ENCODE measurements at regions of chr11 and their contacts with region 1.

Region 1: DNA sequence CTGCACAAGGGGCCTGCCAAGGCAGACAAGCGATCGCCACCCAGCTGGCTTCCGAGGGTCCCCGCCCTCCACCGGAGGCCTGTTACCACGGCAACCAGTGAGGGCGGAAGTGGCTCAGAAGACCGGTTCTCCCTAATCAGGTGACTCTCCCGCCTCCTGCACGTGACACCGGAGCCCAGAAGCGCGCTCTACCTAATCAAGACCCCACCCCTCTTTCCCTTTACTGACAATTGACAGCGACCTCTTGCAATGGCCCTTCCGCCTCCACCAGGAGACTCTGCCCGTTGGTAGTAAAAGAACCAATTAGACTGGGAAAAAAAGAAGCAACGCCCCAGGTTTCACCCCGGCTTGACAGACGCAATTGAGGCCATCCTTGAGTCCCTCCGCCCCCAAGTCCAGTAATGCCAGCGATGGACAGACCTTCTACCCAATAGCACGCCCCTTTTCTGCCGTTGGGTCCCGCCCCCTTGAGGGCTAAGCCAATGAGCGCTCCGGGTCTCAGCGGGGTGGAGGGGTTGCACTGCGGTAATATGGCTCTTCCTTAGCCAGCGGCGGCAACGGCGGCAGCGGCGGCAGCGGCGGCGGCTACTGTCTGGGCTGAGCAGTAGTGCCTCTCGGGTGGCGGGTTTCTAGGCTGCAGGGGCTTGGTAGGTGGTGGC is at the start of gene UVRAG:
- DNase-seq: peak; percentile 99
- ATAC-seq: peak; percentile 96
- H3K4me3 ChIP-seq: peak within 1 kb of the TSS; percentile 73 to 88 (median 76)
- H3K27ac ChIP-seq: peak within 1 kb of the TSS; percentile 84 to 95 (median 90)
- H3K4me1 ChIP-seq: peaks cover 25 to 31% of the 10 kb centered on the region in 2 donors
- H3K27me3 ChIP-seq: no peaks in the 10 kb centered on the region
- CTCF ChIP-seq: peak in 4 of 5 experiments; percentile 19 to 32 (median 22)
- POLR2A ChIP-seq: peak; percentile 88 to 93
- total RNA-seq, gene UVRAG: 16.6 to 22.1 (median 19.3) TPM

Region 2: GRCh38 chr11:75759157-75759556 is 55.7 kb before region 1 on chr11:
- in situ Hi-C with region 1: no loop called
- intact Hi-C with region 1: no loop called
- DNase-seq: no peak
- ATAC-seq: no peak
- H3K4me3 ChIP-seq: no peak overlapping the region
- H3K27ac ChIP-seq: no peak overlapping the region
- H3K4me1 ChIP-seq: no peaks in the 10 kb centered on the region
- H3K27me3 ChIP-seq: no peaks in the 10 kb centered on the region
- CTCF ChIP-seq: no peak
- POLR2A ChIP-seq: no peak

Region 3: DNA sequence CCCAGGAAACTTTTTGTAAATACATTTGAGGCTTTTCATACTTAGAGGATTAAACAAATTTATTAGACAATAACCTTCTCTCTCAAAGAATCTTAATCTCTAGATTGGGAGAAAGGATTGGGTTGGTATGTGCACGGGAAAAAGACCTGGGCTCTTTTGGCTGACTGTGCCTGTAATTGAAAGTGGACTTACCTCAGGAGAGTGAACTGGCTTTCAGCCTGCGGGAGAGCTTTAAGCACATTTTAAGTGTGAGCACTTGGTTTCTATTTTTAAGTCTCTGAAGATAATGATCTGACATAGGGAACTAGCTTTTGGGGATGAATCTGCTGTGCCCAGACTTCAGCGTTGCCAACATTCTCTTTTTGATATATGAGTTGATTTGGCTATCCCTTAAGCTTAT is 36.0 kb after region 1 on chr11:
- in situ Hi-C with region 1: no loop called
- intact Hi-C with region 1: loop called (anchors 5 kb)
- DNase-seq: no peak
- ATAC-seq: peak; percentile 41 to 53
- H3K4me3 ChIP-seq: peak overlapping the region in 1 of 4 donors; percentile 9
- H3K27ac ChIP-seq: peak overlapping the region; percentile 60 to 76 (median 70)
- H3K4me1 ChIP-seq: peaks cover 23 to 32% of the 10 kb centered on the region in 2 donors
- H3K27me3 ChIP-seq: no peaks in the 10 kb centered on the region
- CTCF ChIP-seq: no peak
- POLR2A ChIP-seq: no peak

Region 4: DNA sequence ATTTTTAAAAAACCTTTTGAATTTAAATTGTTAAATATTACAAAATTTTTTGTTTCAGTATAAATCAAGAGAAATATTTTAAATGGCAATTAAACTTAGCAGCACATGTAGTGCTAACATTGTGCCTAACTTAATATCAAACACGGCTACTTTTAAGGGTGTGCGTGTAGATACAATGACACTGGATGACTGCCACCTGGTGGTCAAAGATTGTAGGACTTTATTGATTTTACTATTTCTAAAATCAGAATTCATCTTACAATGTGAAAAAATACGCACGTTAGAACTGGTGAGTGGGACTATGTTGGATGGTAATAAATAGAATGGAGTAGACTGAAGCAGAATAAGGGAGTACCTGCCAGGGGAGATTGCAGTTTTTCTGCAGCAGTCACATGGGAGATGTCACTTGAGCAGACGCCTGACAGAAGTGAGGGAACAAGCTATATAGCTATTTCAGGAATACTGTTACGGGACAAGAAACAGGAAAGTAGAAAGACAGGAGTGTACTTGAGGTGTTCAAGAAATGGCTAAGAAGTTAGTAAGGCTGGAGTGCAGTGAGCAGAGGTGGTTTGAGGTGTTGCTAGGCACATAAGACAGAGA is 53.1 kb after region 1 on chr11:
- in situ Hi-C with region 1: no loop called
- intact Hi-C with region 1: no loop called
- DNase-seq: peak in 1 of 2 donors; percentile 16
- ATAC-seq: peak; percentile 76 to 81
- H3K4me3 ChIP-seq: no peak overlapping the region
- H3K27ac ChIP-seq: no peak overlapping the region
- H3K4me1 ChIP-seq: peaks cover 14 to 15% of the 10 kb centered on the region in 2 donors
- H3K27me3 ChIP-seq: no peaks in the 10 kb centered on the region
- CTCF ChIP-seq: peak; percentile 65 to 86 (median 80)
- POLR2A ChIP-seq: no peak

Region 5: GRCh38 chr11:75878933-75879332 is 64.1 kb after region 1 on chr11:
- in situ Hi-C with region 1: no loop called
- intact Hi-C with region 1: no loop called
- DNase-seq: no peak
- ATAC-seq: no peak
- H3K4me3 ChIP-seq: no peak overlapping the region
- H3K27ac ChIP-seq: no peak overlapping the region
- H3K4me1 ChIP-seq: peaks cover 0 to 6% of the 10 kb centered on the region in 2 donors
- H3K27me3 ChIP-seq: no peaks in the 10 kb centered on the region
- CTCF ChIP-seq: no peak
- POLR2A ChIP-seq: no peak

Region 6: GRCh38 chr11:75966546-75967287 is 151.9 kb after region 1 on chr11:
- in situ Hi-C with region 1: no loop called
- intact Hi-C with region 1: no loop called
- DNase-seq: no peak
- ATAC-seq: no peak
- H3K4me3 ChIP-seq: no peak overlapping the region
- H3K27ac ChIP-seq: no peak overlapping the region
- H3K4me1 ChIP-seq: peaks cover 8 to 15% of the 10 kb centered on the region in 2 donors
- H3K27me3 ChIP-seq: no peaks in the 10 kb centered on the region
- CTCF ChIP-seq: no peak
- POLR2A ChIP-seq: no peak

Measured in gastrocnemius medialis (tissue), 4 donors.